Naive thymus-derived CD4-positive, alpha-beta T cell (primary cell): ENCODE measurements at regions of chr1 and their contacts with region 1.

Region 1: DNA sequence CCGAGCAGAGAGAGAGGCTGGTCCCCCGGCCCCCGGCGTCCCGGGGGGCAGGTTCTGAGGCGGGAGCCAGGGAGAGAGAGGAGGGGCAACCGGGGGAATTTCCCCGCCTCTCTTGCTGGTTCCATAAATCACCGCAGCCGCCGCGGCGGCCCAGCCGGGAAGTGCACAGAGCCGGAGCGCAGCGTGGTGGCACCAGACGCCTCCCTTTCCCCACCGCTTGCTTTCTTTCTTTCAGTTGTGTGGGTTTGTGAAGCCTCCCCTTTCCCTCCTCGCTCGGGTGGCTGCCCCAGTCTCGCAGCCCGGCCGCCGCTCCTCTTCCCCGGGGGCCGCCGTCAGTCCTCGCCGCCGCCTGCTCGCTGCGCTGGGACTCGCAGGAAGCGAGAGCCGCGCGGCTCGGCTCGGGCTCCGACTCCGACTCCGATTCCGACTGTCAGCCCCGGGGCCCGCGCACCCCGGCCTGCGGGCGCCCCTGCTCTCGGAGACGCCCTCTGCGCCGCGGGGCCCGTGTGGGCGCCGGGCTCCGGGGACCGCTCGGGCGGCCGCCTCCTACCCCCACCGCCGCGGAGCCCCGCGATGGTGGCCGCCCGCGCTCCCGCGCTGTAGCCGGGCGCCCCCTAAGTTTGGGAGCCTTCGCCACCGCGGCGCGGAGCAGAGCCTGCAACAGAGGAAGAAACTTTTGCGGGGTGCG is at the start of gene CACHD1:
- DNase-seq: peak; percentile 50 to 85 (median 68)
- ATAC-seq: peak; percentile 89
- H3K4me3 ChIP-seq: peak within 1 kb of the TSS; percentile 54
- H3K4me3 Mint-ChIP-seq: peak within 1 kb of the TSS; percentile 84 to 99 (median 94)
- H3K27ac ChIP-seq: peak within 1 kb of the TSS; percentile 59
- H3K27ac Mint-ChIP-seq: peak within 1 kb of the TSS in 8 of 9 donors; percentile 26 to 73 (median 68)
- H3K4me1 ChIP-seq: peaks cover 0 to 12% of the 10 kb centered on the region in 2 donors
- H3K4me1 Mint-ChIP-seq: peaks cover 13 to 50% (median 24%) of the 10 kb centered on the region in 7 donors
- H3K27me3 ChIP-seq: no peaks in the 10 kb centered on the region
- H3K27me3 Mint-ChIP-seq: peaks cover 28 to 67% (median 42%) of the 10 kb centered on the region in 5 donors
- total RNA-seq, gene CACHD1: 0.15 to 9.0 (median 3.4) TPM

Region 2: GRCh38 chr1:64062941-64063581 is 407.1 kb before region 1 on chr1:
- CTCF ChIA-PET with region 1: no interaction called
- POLR2A ChIA-PET with region 1: no interaction called
- intact Hi-C with region 1: no loop called
- DNase-seq: no peak
- ATAC-seq: no peak
- H3K4me3 ChIP-seq: no peak overlapping the region
- H3K4me3 Mint-ChIP-seq: peak overlapping the region in 5 of 10 donors; percentile 2 to 70 (median 41)
- H3K27ac ChIP-seq: no peak overlapping the region
- H3K27ac Mint-ChIP-seq: peak overlapping the region in 7 of 9 donors; percentile 7 to 59 (median 20)
- H3K4me1 ChIP-seq: no peaks in the 10 kb centered on the region
- H3K4me1 Mint-ChIP-seq: peaks cover 0 to 45% (median 3%) of the 10 kb centered on the region in 7 donors
- H3K27me3 ChIP-seq: no peaks in the 10 kb centered on the region
- H3K27me3 Mint-ChIP-seq: peaks cover 3 to 18% (median 8%) of the 10 kb centered on the region in 5 donors

Region 3: GRCh38 chr1:64268653-64269557 is 201.2 kb before region 1 on chr1:
- CTCF ChIA-PET with region 1: no interaction called
- POLR2A ChIA-PET with region 1: no interaction called
- intact Hi-C with region 1: loop called in 1 of 2 experiments (anchors 5 kb)
- DNase-seq: peak; percentile 30 to 74 (median 62)
- ATAC-seq: peak; percentile 75
- H3K4me3 ChIP-seq: no peak overlapping the region
- H3K4me3 Mint-ChIP-seq: no peak overlapping the region
- H3K27ac ChIP-seq: no peak overlapping the region
- H3K27ac Mint-ChIP-seq: no peak overlapping the region
- H3K4me1 ChIP-seq: no peaks in the 10 kb centered on the region
- H3K4me1 Mint-ChIP-seq: no peaks in the 10 kb centered on the region
- H3K27me3 ChIP-seq: no peaks in the 10 kb centered on the region
- H3K27me3 Mint-ChIP-seq: peaks cover 3 to 18% (median 10%) of the 10 kb centered on the region in 5 donors

Region 4: GRCh38 chr1:64539781-64540218 is 69.7 kb after region 1 on chr1:
- CTCF ChIA-PET with region 1: no interaction called
- POLR2A ChIA-PET with region 1: no interaction called
- intact Hi-C with region 1: loop called in 1 of 2 experiments (anchors 1 kb)
- DNase-seq: no peak
- ATAC-seq: no peak
- H3K4me3 ChIP-seq: no peak overlapping the region
- H3K4me3 Mint-ChIP-seq: peak overlapping the region in 8 of 10 donors; percentile 55 to 84 (median 70)
- H3K27ac ChIP-seq: peak overlapping the region; percentile 4
- H3K27ac Mint-ChIP-seq: peak overlapping the region in 8 of 9 donors; percentile 74 to 95 (median 92)
- H3K4me1 ChIP-seq: peaks cover 0 to 48% of the 10 kb centered on the region in 2 donors
- H3K4me1 Mint-ChIP-seq: peaks cover 30 to 98% (median 65%) of the 10 kb centered on the region in 7 donors
- H3K27me3 ChIP-seq: no peaks in the 10 kb centered on the region
- H3K27me3 Mint-ChIP-seq: peaks cover 0 to 5% (median 0%) of the 10 kb centered on the region in 5 donors

Region 5: GRCh38 chr1:64584479-64584878 is 114.4 kb after region 1 on chr1:
- CTCF ChIA-PET with region 1: interaction called, 3 read pairs
- POLR2A ChIA-PET with region 1: no interaction called
- intact Hi-C with region 1: loop called in 1 of 2 experiments (anchors 1 kb)
- DNase-seq: no peak
- ATAC-seq: no peak
- H3K4me3 ChIP-seq: no peak overlapping the region
- H3K4me3 Mint-ChIP-seq: no peak overlapping the region
- H3K27ac ChIP-seq: no peak overlapping the region
- H3K27ac Mint-ChIP-seq: peak overlapping the region in 1 of 9 donors; percentile 11
- H3K4me1 ChIP-seq: peaks cover 0 to 7% of the 10 kb centered on the region in 2 donors
- H3K4me1 Mint-ChIP-seq: peaks cover 3 to 22% (median 12%) of the 10 kb centered on the region in 7 donors
- H3K27me3 ChIP-seq: no peaks in the 10 kb centered on the region
- H3K27me3 Mint-ChIP-seq: peaks cover 0 to 3% (median 0%) of the 10 kb centered on the region in 5 donors

Region 6: GRCh38 chr1:64675718-64676345 is 205.7 kb after region 1 on chr1:
- CTCF ChIA-PET with region 1: interaction called, 3 read pairs
- POLR2A ChIA-PET with region 1: no interaction called
- intact Hi-C with region 1: loop called (anchors 1 to 5 kb)
- DNase-seq: peak in 5 of 9 donors; percentile 16 to 29 (median 20)
- ATAC-seq: peak; percentile 57
- H3K4me3 ChIP-seq: no peak overlapping the region
- H3K4me3 Mint-ChIP-seq: no peak overlapping the region
- H3K27ac ChIP-seq: no peak overlapping the region
- H3K27ac Mint-ChIP-seq: peak overlapping the region in 1 of 9 donors; percentile 47
- H3K4me1 ChIP-seq: no peaks in the 10 kb centered on the region
- H3K4me1 Mint-ChIP-seq: peaks cover 0 to 2% (median 0%) of the 10 kb centered on the region in 7 donors
- H3K27me3 ChIP-seq: no peaks in the 10 kb centered on the region
- H3K27me3 Mint-ChIP-seq: peaks cover 0 to under 1% (median 0%) of the 10 kb centered on the region in 5 donors

Region 7: GRCh38 chr1:64823691-64824476 is 353.8 kb after region 1 on chr1:
- CTCF ChIA-PET with region 1: interaction called, 3 read pairs
- POLR2A ChIA-PET with region 1: no interaction called
- intact Hi-C with region 1: loop called in 1 of 2 experiments (anchors 1 kb)
- DNase-seq: peak in 8 of 9 donors; percentile 38 to 74 (median 64)
- ATAC-seq: peak; percentile 80
- H3K4me3 ChIP-seq: no peak overlapping the region
- H3K4me3 Mint-ChIP-seq: peak overlapping the region in 3 of 10 donors; percentile 30 to 44 (median 44)
- H3K27ac ChIP-seq: no peak overlapping the region
- H3K27ac Mint-ChIP-seq: peak overlapping the region in 7 of 9 donors; percentile 5 to 77 (median 39)
- H3K4me1 ChIP-seq: peaks cover 5 to 17% of the 10 kb centered on the region in 2 donors
- H3K4me1 Mint-ChIP-seq: peaks cover 13 to 31% (median 26%) of the 10 kb centered on the region in 7 donors
- H3K27me3 ChIP-seq: no peaks in the 10 kb centered on the region
- H3K27me3 Mint-ChIP-seq: peaks cover 0 to 2% (median 0%) of the 10 kb centered on the region in 5 donors